Mammary epithelial cell (primary cell): ENCODE measurements at regions of chr3 and their contacts with region 1.

Region 1: DNA sequence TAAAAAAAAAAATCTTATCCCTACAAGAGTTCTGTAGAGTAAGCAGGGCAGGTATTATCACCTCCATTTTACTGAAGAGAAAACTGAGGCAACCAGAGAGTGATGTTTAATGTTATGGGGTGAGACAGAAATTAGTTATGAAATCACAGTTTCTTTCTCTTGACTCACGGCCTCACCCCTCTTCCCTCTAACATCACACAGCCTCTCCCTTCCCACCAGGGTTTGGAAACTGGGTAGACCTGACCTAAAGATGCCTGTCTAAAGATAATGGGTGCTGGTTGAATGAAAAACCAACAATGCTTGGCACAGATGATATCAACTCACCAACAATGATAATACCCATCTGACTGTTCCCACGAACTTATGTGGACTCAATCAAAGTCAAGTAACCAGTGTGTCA is 397.8 kb upstream of the WNT5A start:
- DNase-seq: peak; percentile 88
- H3K4me3 ChIP-seq: no peak overlapping the region
- H3K27ac ChIP-seq: peak overlapping the region; percentile 96
- H3K4me1 ChIP-seq: peaks cover 30% of the 10 kb centered on the region
- H3K27me3 ChIP-seq: no peaks in the 10 kb centered on the region
- CTCF ChIP-seq: no peak

Region 2: GRCh38 chr3:55752911-55753310 is 132.0 kb before region 1 on chr3:
- CTCF ChIA-PET with region 1: no interaction called
- dilution Hi-C with region 1: no loop called
- in situ Hi-C with region 1: loop called in 1 of 2 experiments (anchors 25 kb)
- intact Hi-C with region 1: loop called (anchors 1 kb)
- DNase-seq: no peak
- H3K4me3 ChIP-seq: no peak overlapping the region
- H3K27ac ChIP-seq: no peak overlapping the region
- H3K4me1 ChIP-seq: peaks cover 11% of the 10 kb centered on the region
- H3K27me3 ChIP-seq: no peaks in the 10 kb centered on the region
- CTCF ChIP-seq: no peak

Region 3: GRCh38 chr3:55828712-55829111 is 56.2 kb before region 1 on chr3:
- CTCF ChIA-PET with region 1: no interaction called
- dilution Hi-C with region 1: no loop called
- in situ Hi-C with region 1: no loop called
- intact Hi-C with region 1: no loop called
- DNase-seq: no peak
- H3K4me3 ChIP-seq: no peak overlapping the region
- H3K27ac ChIP-seq: no peak overlapping the region
- H3K4me1 ChIP-seq: no peaks in the 10 kb centered on the region
- H3K27me3 ChIP-seq: no peaks in the 10 kb centered on the region
- CTCF ChIP-seq: no peak